ENCODE measurements at regions of chr19 and their contacts with region 1.

Region 1: GRCh38 chr19:45994989-45995714 is at the start of gene CCDC61:
- DNase-seq: peak; percentile 99
- H3K4me3 ChIP-seq: peak within 1 kb of the TSS; percentile 68 to 94 (median 74)
- H3K27ac ChIP-seq: peak within 1 kb of the TSS; percentile 71 to 85 (median 79)
- H3K4me1 ChIP-seq: peaks cover 18 to 29% (median 26%) of the 10 kb centered on the region in 4 donors
- H3K27me3 ChIP-seq: peaks cover 0 to 28% (median 5%) of the 10 kb centered on the region in 4 donors
- CTCF ChIP-seq: no peak
- EP300 ChIP-seq: no peak
- POLR2A ChIP-seq: peak; percentile 56
- total RNA-seq, gene CCDC61: 5.3 to 9.6 (median 8.6) TPM

Region 2: GRCh38 chr19:45902651-45903625 is 92.2 kb before region 1 on chr19:
- intact Hi-C with region 1: loop called (anchors 10 kb)
- DNase-seq: peak; percentile 97
- H3K4me3 ChIP-seq: peak overlapping the region; percentile 70 to 82 (median 72)
- H3K27ac ChIP-seq: peak overlapping the region; percentile 75 to 83 (median 80)
- H3K4me1 ChIP-seq: peaks cover 18 to 34% (median 30%) of the 10 kb centered on the region in 4 donors
- H3K27me3 ChIP-seq: peaks cover 0 to 8% (median 2%) of the 10 kb centered on the region in 4 donors
- CTCF ChIP-seq: no peak
- EP300 ChIP-seq: no peak
- POLR2A ChIP-seq: peak; percentile 25

Region 3: DNA sequence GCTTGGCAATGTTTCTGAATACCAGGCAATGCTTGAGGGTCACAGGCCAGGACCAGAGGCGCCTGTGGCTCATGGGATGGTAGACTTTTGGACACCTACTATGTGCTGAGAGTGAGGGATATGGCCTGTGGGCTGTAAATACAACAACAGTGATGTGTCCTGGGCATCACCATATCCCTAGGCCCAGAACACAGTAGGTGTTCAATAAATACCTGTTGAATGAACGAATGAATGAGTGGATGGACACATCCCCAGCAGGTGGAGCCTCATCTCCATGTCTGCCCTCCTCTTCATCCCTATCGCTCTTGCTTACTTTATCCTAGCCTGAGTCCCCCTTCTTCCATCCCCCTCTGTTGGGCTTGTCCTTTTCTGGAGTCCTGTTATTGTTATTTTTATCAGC is 64.1 kb before region 1 on chr19:
- intact Hi-C with region 1: no loop called
- DNase-seq: no peak
- H3K4me3 ChIP-seq: no peak overlapping the region
- H3K27ac ChIP-seq: no peak overlapping the region
- H3K4me1 ChIP-seq: peaks cover 5 to 8% (median 7%) of the 10 kb centered on the region in 4 donors
- H3K27me3 ChIP-seq: peaks cover 0 to 54% (median 11%) of the 10 kb centered on the region in 4 donors
- CTCF ChIP-seq: no peak
- EP300 ChIP-seq: no peak
- POLR2A ChIP-seq: no peak

Measured in esophagus muscularis mucosa (tissue), 4 donors.